Ovary (tissue), 10 donors: ENCODE measurements at regions of chr22 and their contacts with region 1.

Region 1: GRCh38 chr22:40965936-40966725 is 15.0 kb downstream of the RBX1 start:
- DNase-seq: no peak
- H3K4me3 ChIP-seq: no peak overlapping the region
- H3K27ac ChIP-seq: no peak overlapping the region
- H3K4me1 ChIP-seq: no peaks in the 10 kb centered on the region
- H3K27me3 ChIP-seq: no peaks in the 10 kb centered on the region
- CTCF ChIP-seq: no peak
- EP300 ChIP-seq: no peak
- POLR2A ChIP-seq: no peak

Region 2: DNA sequence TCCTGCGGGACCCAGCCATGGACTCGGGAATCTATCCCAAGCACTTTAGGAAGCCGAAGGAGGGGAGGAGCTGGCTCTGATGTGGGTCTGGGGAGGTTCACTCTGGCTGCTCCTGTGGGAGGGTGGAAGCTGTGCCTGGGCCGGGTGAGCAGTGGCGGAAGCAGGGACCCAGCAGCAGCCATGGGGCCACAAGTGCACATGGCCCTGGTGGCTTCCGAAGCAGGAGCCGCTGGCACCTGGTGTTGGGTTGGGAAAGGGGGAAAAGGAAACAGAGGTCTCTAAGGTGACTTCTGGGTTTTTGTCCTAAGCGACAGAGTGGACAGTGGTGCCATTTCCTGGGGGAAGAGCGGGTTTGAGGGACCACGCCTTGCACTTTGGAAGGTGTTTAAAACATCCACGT is 24.3 kb after region 1 on chr22:
- intact Hi-C with region 1: loop called in 1 of 4 experiments (anchors 2 kb)
- DNase-seq: no peak
- H3K4me3 ChIP-seq: no peak overlapping the region
- H3K27ac ChIP-seq: no peak overlapping the region
- H3K4me1 ChIP-seq: no peaks in the 10 kb centered on the region
- H3K27me3 ChIP-seq: no peaks in the 10 kb centered on the region
- CTCF ChIP-seq: no peak
- EP300 ChIP-seq: no peak
- POLR2A ChIP-seq: no peak

Region 3: DNA sequence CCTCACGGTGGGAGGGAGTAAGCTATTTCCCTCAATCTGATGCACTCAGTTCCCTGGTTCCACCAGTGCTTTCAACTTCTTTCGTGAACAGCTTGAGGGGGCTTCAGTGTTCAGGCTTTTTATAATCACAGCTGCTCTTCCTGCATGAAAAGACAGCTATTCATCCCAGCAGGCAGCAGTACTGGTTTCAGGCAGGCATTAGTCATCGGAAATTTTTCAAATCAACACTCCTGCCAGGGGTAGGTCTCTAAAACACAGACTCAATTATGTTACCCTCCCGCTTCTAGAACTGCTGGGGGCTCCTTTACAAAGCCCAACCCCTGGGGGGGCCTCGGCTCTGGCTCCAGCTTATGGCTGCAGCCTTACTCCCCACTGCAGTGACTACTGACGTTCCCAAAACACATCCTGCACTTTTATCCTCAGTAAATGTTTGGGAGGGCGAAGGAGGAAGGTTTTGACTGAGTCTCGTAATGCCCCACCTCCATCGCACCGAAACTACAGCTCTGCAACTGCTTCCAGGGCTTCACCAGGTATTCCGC is 1642.8 kb after region 1 on chr22:
- intact Hi-C with region 1: no loop called
- DNase-seq: no peak
- H3K4me3 ChIP-seq: no peak overlapping the region
- H3K27ac ChIP-seq: peak overlapping the region; percentile 48 to 70
- H3K4me1 ChIP-seq: peaks cover 33% of the 10 kb centered on the region
- H3K27me3 ChIP-seq: no peaks in the 10 kb centered on the region
- CTCF ChIP-seq: no peak
- EP300 ChIP-seq: no peak
- POLR2A ChIP-seq: no peak